ENCODE measurements at regions of chr14 and their contacts with region 1.

Region 1: GRCh38 chr14:64880221-64881121 is 764 bp upstream of the SPTB start:
- DNase-seq: peak; percentile 66
- ATAC-seq: peak; percentile 64

Region 2: GRCh38 chr14:64823305-64823861 is 57.1 kb before region 1 on chr14:
- intact Hi-C with region 1: loop called (anchors 2 kb)
- DNase-seq: peak; percentile 91
- ATAC-seq: peak; percentile 88

Region 3: DNA sequence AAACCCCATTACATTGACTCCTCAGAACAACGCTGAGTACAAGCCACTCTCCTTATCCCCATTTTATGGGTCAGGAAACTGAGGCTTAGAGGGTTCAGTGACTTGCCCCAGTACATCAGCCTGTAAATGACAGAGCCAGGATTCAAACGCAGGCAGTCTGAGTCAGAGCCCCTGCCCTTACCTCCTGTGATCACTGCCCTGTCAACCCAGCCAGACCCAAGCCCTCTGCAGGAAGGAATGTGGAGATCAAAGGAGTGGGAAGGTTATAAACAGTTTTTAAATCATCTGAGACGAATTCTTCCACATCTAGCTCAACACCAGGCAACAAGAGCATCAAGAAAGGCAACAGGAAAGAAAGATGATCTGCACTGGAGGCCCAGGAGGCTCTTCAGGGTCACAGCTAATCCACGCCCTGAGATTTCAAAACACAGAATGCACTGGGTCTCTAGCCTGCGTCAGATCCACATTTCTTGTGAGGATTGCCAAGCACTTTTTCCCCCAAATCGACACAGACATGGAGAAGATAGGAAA is 39.3 kb before region 1 on chr14:
- intact Hi-C with region 1: loop called (anchors 1 kb)
- DNase-seq: no peak
- ATAC-seq: peak; percentile 62

Region 4: DNA sequence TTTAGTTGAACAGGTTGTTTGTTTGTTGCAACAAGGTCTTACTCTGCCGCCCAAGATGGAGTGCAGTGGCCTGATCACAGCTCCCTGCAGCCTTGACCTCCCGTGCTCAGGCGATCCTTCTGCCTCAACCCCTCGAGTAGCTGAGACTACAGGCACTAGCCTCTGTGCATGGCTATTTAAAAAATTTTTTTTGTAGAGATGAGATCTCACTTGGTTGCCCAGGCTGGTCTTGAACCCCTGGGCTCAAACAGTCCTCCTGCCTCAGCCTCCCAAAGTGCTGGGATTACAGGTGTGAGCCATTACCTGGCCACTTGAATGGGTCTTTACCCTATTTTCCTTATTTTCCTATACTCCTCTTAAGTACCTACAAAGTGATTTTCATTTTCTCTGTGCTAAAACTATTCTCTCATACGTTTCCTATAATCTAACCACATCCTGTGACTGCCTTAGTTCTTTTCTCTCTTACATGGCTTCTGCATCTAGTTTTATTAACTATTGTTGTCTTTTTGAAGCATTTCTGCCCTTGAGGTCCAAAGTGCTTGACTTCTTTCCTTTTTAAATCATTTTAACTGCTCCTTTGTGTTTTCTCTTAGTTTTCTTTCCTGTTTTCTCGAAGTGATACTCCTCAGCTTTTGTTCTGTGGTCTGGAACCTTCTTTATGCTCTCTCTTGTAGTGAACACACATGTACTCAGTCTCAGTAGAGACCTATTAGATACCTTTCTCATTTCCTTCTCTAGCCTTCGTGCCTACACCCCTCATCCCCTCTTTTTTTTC is 48.0 kb after region 1 on chr14:
- intact Hi-C with region 1: no loop called
- DNase-seq: no peak
- ATAC-seq: no peak

Region 5: GRCh38 chr14:64938972-64939816 is 58.7 kb after region 1 on chr14:
- intact Hi-C with region 1: no loop called
- DNase-seq: no peak
- ATAC-seq: no peak

Region 6: GRCh38 chr14:65594153-65594881 is 713.8 kb after region 1 on chr14:
- intact Hi-C with region 1: no loop called
- DNase-seq: no peak
- ATAC-seq: no peak